Aorta (tissue), 5 donors: ENCODE measurements at regions of chr19 and their contacts with region 1.

Region 1: DNA sequence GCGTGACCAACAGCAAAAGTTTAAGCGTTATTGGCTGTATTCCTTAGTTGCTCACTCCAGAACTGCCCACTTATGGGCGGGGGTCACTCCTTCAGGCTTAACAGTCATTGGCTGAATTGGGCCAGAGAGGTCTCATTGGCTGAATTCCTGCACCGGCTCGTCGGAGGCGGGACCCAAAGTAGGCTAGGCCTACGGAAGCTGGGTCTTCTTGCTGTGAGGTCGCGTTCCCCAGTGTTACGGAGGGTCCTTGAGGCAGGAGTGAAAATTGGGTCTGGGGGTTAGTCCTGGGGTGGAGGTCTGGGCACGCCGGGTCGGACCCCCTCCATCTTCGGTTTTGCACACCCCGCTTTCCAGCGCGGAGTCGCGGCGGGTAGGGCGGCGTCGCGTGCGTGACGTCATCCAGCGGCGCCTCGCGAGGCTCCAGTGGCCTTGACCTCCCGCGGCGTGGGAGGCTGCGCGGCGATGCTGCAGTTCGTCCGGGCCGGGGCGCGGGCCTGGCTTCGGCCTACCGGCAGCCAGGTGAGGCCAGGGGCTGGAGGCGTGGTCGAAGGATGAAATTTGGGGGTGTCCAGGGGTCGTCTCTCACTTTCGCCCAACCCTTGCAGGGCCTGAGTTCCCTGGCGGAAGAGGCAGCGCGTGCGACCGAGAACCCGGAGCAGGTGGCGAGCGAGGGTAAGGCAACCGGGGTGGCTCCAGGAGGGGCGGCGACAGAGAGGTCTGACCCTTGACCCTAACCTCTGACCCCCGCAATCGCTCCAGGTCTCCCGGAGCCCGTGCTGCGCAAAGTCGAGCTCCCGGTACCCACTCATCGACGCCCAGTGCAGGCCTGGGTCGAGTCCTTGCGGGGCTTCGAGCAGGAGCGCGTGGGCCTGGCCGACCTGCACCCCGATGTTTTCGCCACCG is at the start of gene MRPL4:
- DNase-seq: peak; percentile 97 to 98
- ATAC-seq: peak; percentile 96
- H3K4me3 ChIP-seq: peak within 1 kb of the TSS; percentile 37 to 78
- H3K27ac ChIP-seq: no peak within 1 kb of the TSS
- H3K4me1 ChIP-seq: no peaks in the 10 kb centered on the region
- H3K27me3 ChIP-seq: no peaks in the 10 kb centered on the region
- total RNA-seq, gene MRPL4: 22.7 to 25.4 TPM

Region 2: GRCh38 chr19:10106100-10106936 is 145.7 kb before region 1 on chr19 and contains the start of gene PPAN:
- intact Hi-C with region 1: loop called in 1 of 2 experiments (anchors 2 kb)
- DNase-seq: peak; percentile 99
- ATAC-seq: peak; percentile 98
- H3K4me3 ChIP-seq: peak within 1 kb of the TSS; percentile 58 to 74
- H3K27ac ChIP-seq: no peak within 1 kb of the TSS
- H3K4me1 ChIP-seq: no peaks in the 10 kb centered on the region
- H3K27me3 ChIP-seq: no peaks in the 10 kb centered on the region
- total RNA-seq, gene PPAN: 24.3 to 30.9 TPM

Region 3: DNA sequence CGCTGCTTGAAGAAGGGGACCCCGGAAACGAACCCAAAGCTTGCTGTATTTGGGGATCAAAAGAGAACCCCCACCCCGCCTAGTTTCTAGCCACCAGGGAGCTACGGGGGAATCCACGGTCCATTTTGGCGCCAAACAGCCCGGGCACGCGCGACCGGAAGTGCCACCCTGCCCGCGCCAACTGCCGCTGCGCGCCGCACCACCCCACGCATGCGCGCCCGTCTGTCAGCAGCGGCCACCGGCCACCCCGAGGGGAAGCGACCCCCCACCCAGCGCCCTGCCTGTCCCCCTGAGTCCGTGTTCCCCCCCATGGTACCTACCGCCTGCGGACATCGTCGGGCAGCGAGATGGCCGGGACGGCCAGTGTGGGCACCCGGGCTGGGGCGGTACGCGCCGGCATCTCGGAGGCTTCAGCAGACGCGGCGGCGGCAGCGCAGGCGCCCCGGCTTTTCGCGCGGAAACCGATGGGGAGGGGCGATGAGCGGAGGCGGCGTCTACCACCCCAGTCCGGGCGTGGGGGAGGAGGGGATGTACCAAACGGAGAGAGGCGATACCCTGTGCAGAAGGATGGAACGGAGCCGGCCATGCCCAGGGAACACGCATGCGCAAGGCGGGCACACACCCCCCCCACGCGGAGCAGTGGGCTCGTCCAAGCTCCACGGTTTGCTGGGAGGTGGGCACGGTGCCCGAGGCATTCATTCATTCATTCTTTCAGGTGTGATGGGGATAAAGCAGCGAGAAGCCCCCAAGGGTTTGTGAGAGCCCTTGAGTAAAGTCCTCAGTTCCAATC is 57.3 kb before region 1 on chr19 and contains the start of gene DNMT1:
- intact Hi-C with region 1: loop called in 1 of 2 experiments (anchors 2 kb)
- DNase-seq: peak; percentile 98 to 99
- ATAC-seq: peak; percentile 97
- H3K4me3 ChIP-seq: peak within 1 kb of the TSS; percentile 49 to 69
- H3K27ac ChIP-seq: peak within 1 kb of the TSS in 1 of 2 donors; percentile 43
- H3K4me1 ChIP-seq: no peaks in the 10 kb centered on the region
- H3K27me3 ChIP-seq: no peaks in the 10 kb centered on the region
- total RNA-seq, gene DNMT1: 59.6 to 89.0 TPM